ENCODE measurements at regions of chr19 and their contacts with region 1.

Region 1: GRCh38 chr19:3324321-3324856 is 42.0 kb upstream of the NFIC start:
- DNase-seq: peak in 1 of 2 experiments; percentile 46
- H3K4me3 ChIP-seq: no peak overlapping the region
- H3K27ac ChIP-seq: no peak overlapping the region
- H3K4me1 ChIP-seq: no peaks in the 10 kb centered on the region
- H3K27me3 ChIP-seq: no peaks in the 10 kb centered on the region
- CTCF ChIP-seq: peak; percentile 81

Region 2: DNA sequence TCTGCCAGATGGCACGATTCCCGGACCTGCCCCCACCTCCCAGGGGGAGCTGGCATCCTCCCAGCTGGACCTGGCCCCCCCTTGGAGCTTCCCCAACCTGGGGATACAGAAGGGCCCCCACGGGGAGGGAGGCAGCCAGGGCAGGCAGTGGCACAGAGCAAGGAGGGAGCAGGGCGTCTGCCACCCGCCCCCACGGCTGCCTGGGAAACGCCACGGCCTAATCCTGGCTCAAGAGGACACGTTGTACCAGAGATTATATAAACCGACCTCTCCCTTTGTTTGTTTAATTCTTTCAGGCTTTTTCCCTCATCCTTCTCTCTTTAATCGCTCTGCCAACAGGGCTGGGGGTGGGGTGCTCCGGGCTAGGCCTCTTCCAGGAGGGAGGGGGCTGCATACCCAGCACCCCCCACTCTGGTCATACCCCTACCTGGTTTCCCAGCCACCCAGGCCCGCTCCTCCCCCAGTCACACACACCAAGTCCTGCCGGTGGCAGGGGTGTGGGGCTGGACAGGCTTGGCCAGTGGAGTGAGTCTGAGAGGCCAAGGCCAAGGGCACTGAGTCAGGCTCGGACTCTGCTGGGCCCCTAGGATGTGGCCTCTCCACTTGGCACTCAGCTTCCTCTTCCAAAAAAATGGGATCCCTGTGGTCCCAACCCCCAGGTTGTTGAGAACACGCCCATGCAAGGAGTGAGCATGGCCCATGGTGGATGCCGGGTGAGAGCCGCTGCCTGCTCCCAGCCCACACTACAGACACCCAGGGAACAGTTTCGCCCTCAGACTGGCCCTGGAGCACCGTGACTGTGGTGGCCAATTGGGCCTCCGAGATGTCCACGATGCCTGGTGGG is 12.5 kb after region 1 on chr19:
- CTCF ChIA-PET with region 1: no interaction called
- POLR2A ChIA-PET with region 1: no interaction called
- intact Hi-C with region 1: no loop called
- DNase-seq: peak; percentile 62 to 70
- H3K4me3 ChIP-seq: peak overlapping the region; percentile 7; the same call in 1 of the 2 replicates
- H3K27ac ChIP-seq: peak overlapping the region; percentile 65
- H3K4me1 ChIP-seq: peaks cover 32% of the 10 kb centered on the region
- H3K27me3 ChIP-seq: no peaks in the 10 kb centered on the region
- CTCF ChIP-seq: no peak

Region 3: DNA sequence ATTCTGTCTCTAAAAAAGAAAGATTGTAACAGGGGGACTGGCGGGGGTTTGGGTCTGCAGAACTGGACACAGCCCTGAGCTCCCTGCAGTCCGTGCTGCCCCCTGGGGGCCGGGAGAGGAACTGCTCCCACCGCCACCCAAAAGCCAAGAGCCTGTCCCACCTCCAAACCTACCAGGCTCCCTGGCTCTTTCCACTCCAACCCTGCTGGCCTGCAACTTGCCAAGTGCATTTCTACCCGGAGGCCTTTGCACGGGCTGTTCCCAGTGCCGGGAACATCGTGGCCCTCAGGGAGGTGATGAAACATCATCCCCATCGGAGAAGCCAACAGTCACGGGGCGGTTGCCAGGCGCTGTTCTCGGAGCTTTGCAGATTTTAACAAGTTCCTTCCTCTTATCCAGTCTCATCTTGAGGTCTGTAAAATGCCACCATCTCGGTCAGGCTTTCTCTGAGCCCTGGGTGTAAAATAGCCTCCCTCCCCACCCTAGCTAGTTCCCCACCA is 105.2 kb after region 1 on chr19:
- CTCF ChIA-PET with region 1: interaction called, 3 read pairs
- POLR2A ChIA-PET with region 1: interaction called, 3 read pairs
- intact Hi-C with region 1: loop called (anchors 2 kb)
- DNase-seq: peak in 1 of 2 experiments; percentile 61
- H3K4me3 ChIP-seq: no peak overlapping the region
- H3K27ac ChIP-seq: no peak overlapping the region
- H3K4me1 ChIP-seq: no peaks in the 10 kb centered on the region
- H3K27me3 ChIP-seq: no peaks in the 10 kb centered on the region
- CTCF ChIP-seq: peak; percentile 81

Region 4: GRCh38 chr19:3471954-3472655 is 147.7 kb after region 1 on chr19:
- CTCF ChIA-PET with region 1: no interaction called
- POLR2A ChIA-PET with region 1: no interaction called
- intact Hi-C with region 1: loop called (anchors 2 kb)
- DNase-seq: no peak
- H3K4me3 ChIP-seq: no peak overlapping the region
- H3K27ac ChIP-seq: no peak overlapping the region
- H3K4me1 ChIP-seq: no peaks in the 10 kb centered on the region
- H3K27me3 ChIP-seq: no peaks in the 10 kb centered on the region
- CTCF ChIP-seq: peak; percentile 78

Measured in PC-9 (cell line).